Lower leg skin (tissue), 4 donors: ENCODE measurements at regions of chr2 and their contacts with region 1.

Region 1: DNA sequence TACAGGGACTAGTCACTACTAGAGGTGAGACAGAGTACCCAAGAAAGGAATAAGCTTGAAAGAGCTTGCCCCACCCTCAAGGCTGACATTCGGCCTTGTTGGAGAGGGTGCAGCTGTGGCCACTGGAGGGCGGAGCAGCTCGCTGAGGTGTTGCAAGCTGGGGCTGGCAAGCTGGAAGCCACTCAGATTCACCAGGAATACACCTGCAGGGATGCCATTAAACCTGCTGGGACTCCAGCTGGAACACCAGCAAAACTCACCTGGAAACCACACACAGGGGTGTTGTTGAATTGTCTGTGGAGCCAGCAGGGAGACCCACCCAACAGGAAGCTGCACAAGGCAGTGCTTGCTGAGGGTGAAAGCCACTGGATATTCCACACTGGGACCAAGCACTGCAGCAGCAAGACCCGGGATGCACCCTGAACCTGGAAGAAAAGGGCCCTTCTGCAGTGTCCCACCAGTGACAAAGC is 26.1 kb downstream of the KCTD18 start:
- DNase-seq: no peak
- H3K4me3 ChIP-seq: no peak overlapping the region
- CTCF ChIP-seq: no peak
- POLR2A ChIP-seq: no peak

Region 2: GRCh38 chr2:199979832-199980628 is 503.7 kb before region 1 on chr2:
- intact Hi-C with region 1: loop called (anchors 5 kb)
- DNase-seq: peak; percentile 81 to 97
- H3K4me3 ChIP-seq: no peak overlapping the region
- CTCF ChIP-seq: peak in 1 of 3 donors; percentile 86
- POLR2A ChIP-seq: no peak

Region 3: GRCh38 chr2:200575957-200576356 is 92.2 kb after region 1 on chr2:
- intact Hi-C with region 1: no loop called
- DNase-seq: no peak
- H3K4me3 ChIP-seq: no peak overlapping the region
- CTCF ChIP-seq: no peak
- POLR2A ChIP-seq: no peak